ENCODE measurements at regions of chr16 and their contacts with region 1.

Region 1: DNA sequence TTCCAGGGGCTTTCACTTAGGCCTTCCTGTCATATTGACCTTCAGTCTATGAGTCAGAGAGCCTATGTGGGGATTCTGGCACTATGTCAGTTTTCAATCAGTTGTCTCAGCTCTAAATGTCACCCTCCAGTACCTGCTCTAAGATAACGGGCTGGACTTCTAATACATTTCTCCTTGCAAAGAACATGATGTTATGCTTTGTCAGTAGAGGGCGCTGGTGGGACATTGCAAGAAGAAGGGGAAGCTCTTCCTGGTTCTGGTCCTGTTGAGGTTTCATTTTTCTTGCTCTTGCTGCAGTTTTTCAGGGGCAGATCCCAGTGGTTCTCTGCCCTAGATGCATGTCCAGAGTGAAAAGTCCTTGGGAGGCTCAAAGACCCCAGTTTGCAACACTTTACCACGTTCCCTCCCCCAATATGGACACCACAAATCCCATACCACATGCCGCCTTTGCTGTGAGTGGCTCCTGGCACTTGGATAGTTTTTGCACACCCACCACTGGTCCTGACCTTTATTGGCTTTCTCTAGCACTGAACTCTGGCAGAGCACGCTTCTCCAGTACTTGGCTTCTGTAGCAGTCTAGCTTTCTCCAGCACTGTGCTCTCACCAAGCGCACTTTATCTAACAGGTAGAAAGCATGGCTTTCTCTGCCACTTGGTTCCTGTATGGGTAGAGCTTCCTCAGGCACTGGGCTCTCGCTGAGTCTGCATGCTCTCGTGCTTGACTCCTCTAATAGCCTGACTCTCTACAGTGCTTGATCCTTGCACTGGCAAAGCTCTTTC is 49.0 kb downstream of the BCL7C start:
- DNase-seq: peak; percentile 93
- H3K4me3 Mint-ChIP-seq: no peak overlapping the region
- H3K27ac Mint-ChIP-seq: no peak overlapping the region
- H3K4me1 Mint-ChIP-seq: peaks cover 8% of the 10 kb centered on the region
- H3K27me3 Mint-ChIP-seq: no peaks in the 10 kb centered on the region

Region 2: GRCh38 chr16:29891525-29892457 is 953.1 kb before region 1 on chr16:
- CTCF ChIA-PET with region 1: no interaction called
- intact Hi-C with region 1: no loop called
- DNase-seq: no peak
- H3K4me3 Mint-ChIP-seq: no peak overlapping the region
- H3K27ac Mint-ChIP-seq: no peak overlapping the region
- H3K4me1 Mint-ChIP-seq: no peaks in the 10 kb centered on the region
- H3K27me3 Mint-ChIP-seq: peaks cover 4% of the 10 kb centered on the region

Region 3: DNA sequence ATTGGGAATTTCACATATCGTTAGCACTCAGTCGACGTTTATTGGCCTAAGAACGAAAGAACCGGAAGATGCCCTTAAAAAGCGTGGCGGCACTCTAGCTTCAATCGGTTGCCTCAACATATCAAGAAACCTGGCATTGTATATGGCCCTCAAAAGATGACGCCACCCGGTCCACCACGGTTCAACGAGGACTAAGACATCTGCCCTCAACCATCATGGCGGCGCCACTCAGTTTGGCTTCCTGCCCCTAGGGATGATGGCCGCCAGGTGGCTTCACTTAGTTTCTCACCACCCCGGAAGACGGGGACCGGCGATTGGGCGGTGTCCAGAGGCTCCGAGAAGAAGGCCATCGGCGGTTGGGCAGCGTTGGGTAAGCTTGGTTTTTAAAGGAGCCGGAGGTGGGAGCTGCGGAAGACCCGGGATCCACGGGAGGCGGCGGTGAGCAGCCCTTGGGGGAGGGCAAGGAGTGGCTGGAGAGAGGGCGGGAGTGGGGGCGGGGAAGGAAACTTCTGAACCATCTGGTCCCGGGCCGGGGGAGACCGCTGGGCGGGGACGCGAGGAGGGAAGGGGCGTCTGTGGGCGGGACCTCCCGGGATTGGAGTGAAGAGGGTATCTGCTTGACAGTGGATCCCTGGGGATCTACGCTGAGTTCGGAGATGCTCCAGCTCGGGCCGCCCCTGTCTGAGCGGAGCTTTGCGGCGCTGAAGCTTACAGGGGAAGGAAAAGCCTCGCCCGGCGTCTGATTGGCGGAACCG is 194.3 kb before region 1 on chr16 and contains the start of gene PRR14:
- CTCF ChIA-PET with region 1: no interaction called
- intact Hi-C with region 1: no loop called
- DNase-seq: peak; percentile 100
- H3K4me3 Mint-ChIP-seq: peak within 1 kb of the TSS; percentile 85
- H3K27ac Mint-ChIP-seq: peak within 1 kb of the TSS; percentile 91
- H3K4me1 Mint-ChIP-seq: peaks cover 22% of the 10 kb centered on the region
- H3K27me3 Mint-ChIP-seq: no peaks in the 10 kb centered on the region
- total RNA-seq, gene PRR14: 50.6 to 52.4 TPM

Region 4: GRCh38 chr16:30663820-30664396 is 181.0 kb before region 1 on chr16:
- CTCF ChIA-PET with region 1: no interaction called
- intact Hi-C with region 1: no loop called
- DNase-seq: no peak
- H3K4me3 Mint-ChIP-seq: no peak overlapping the region
- H3K27ac Mint-ChIP-seq: peak overlapping the region; percentile 98
- H3K4me1 Mint-ChIP-seq: peaks cover 37% of the 10 kb centered on the region
- H3K27me3 Mint-ChIP-seq: no peaks in the 10 kb centered on the region

Region 5: DNA sequence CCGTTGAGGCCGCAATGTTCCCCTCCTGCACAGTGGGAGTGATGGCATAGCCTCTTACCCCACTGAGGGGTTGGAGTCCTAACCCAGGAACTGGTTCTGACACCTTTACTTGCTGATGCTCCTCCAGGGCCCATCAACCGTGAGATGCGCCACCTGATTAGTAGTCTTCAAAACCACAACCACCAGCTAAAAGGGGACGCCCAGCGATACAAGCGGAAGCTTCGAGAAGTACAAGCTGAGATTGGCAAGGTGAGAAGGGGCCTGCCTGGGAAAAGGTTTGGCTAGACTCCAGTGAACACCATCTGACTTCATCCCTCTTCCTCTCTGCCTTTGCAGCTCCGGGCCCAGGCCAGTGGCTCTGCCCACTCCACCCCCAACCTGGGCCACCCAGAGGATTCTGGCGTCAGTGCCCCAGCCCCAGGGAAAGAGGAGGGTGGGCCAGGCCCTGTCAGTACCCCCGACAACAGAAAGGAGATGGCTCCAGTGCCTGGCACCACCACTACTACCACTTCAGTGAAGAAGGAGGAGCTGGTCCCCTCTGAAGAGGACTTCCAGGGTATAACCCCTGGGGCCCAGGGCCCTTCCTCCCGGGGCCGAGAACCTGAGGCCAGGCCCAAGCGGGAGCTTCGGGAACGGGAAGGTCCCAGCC is 77.0 kb before region 1 on chr16:
- CTCF ChIA-PET with region 1: no interaction called
- intact Hi-C with region 1: no loop called
- DNase-seq: no peak
- H3K4me3 Mint-ChIP-seq: no peak overlapping the region
- H3K27ac Mint-ChIP-seq: no peak overlapping the region
- H3K4me1 Mint-ChIP-seq: peaks cover 13% of the 10 kb centered on the region
- H3K27me3 Mint-ChIP-seq: no peaks in the 10 kb centered on the region

Region 6: DNA sequence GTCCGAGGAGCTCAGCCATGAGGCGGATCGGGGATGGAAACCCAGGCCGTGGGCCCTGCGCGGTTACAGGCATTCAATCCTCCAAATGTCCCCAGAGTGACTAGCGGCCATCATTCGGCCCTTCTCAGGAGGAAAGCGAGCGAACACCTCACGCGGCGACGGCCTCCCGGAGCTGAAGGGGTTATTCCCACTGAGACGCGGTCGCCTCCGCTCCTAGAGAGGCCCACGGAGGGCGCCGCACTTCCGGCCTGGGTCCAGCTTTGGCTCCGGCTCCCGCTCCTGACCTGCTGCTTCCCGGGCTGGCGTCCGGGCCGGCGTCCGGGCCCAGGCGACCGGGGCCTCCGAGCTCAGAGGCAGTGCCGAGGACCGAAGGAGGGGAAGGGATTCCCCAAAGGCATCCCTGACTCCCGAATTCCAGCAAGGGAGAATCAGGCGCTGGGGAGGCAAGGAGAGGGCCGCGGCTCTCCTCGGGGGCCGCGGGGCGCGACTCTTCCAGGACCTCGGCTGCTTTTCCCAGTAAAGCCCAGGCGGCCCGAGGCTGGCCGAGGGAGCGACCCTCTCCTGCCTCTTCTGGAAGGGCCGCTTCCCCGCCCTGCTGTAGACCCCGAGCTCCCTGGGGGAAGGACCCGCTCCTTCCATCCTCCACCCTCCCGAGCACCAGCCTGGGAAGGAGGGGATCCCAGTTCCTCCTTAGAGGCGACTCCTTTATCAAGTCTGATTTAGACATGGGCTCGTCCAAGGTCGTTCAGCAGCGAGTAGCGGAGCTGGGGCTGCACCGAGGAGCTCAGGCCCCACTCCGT is 39.3 kb before region 1 on chr16:
- CTCF ChIA-PET with region 1: interaction called, 11 read pairs
- intact Hi-C with region 1: no loop called
- DNase-seq: peak; percentile 60
- H3K4me3 Mint-ChIP-seq: peak overlapping the region; percentile 67
- H3K27ac Mint-ChIP-seq: peak overlapping the region; percentile 31
- H3K4me1 Mint-ChIP-seq: peaks cover 19% of the 10 kb centered on the region
- H3K27me3 Mint-ChIP-seq: no peaks in the 10 kb centered on the region

Region 7: DNA sequence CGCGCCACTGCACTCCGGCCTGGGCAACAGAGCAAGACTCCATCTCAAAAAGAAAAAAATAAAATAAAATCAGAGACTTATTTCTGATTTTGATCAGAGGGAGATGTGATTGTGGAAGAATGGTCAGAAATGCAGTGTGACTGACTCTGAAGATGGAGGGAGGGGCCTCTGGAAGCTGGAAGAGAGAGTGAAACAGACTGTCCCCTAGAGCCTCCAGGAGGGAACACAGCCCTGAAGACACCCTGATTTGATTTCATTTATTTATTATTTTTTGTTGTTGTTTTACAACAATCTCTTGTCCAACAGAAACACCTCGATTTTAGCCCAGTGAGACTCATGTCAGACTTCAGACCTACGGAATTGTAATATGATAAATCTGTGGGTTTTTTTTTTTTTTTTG is 22.9 kb after region 1 on chr16:
- CTCF ChIA-PET with region 1: interaction called, 12 read pairs
- intact Hi-C with region 1: no loop called
- DNase-seq: no peak
- H3K4me3 Mint-ChIP-seq: no peak overlapping the region
- H3K27ac Mint-ChIP-seq: no peak overlapping the region
- H3K4me1 Mint-ChIP-seq: peaks cover 3% of the 10 kb centered on the region
- H3K27me3 Mint-ChIP-seq: no peaks in the 10 kb centered on the region

Region 8: DNA sequence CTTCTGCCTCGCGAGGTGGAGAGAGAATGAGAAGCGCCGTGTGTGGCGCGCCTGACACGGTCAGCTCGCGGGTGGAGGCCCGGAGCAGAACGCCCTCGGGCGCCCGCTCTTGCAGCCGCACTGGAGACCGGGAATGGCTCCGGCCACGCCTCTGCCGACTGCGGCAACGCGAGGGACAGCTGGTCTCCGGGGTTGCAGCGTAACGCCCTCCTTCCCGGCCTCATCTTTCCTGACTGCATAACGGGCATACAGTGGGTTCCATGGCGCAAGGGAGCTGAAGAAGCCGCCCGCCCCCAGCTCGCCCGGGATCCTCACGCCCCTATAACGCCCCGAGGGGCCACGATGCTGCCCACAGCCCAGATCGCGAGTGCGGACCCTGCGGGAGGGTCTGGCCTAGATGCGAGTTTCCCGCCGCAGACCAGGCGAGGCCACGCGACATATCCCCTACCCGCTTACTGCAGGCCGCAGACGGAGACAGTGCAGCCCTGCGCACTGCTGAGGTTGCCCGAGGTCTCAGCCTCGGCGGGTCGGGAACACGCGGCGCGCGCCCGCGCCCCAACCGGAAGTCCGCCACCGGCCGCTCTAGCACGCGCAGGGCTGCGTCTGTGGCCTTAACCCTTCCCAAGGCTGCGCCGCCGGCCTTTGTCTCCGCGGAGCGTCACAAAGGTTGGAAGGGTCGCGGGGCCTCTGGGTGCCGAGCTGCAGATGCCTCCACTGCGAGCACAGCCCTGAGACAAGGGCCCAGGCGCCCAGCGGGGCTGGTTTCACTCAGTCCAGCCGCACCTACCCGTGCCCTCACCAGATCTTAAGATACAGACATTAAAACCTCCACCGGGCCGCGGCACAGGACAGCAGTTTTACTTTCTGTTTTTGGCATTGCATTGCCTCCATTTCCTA is 30.2 kb after region 1 on chr16:
- CTCF ChIA-PET with region 1: interaction called, 22 read pairs
- intact Hi-C with region 1: loop called (anchors 2 kb)
- DNase-seq: peak; percentile 90
- H3K4me3 Mint-ChIP-seq: peak overlapping the region; percentile 92
- H3K27ac Mint-ChIP-seq: peak overlapping the region; percentile 96
- H3K4me1 Mint-ChIP-seq: peaks cover 40% of the 10 kb centered on the region
- H3K27me3 Mint-ChIP-seq: no peaks in the 10 kb centered on the region

Region 9: DNA sequence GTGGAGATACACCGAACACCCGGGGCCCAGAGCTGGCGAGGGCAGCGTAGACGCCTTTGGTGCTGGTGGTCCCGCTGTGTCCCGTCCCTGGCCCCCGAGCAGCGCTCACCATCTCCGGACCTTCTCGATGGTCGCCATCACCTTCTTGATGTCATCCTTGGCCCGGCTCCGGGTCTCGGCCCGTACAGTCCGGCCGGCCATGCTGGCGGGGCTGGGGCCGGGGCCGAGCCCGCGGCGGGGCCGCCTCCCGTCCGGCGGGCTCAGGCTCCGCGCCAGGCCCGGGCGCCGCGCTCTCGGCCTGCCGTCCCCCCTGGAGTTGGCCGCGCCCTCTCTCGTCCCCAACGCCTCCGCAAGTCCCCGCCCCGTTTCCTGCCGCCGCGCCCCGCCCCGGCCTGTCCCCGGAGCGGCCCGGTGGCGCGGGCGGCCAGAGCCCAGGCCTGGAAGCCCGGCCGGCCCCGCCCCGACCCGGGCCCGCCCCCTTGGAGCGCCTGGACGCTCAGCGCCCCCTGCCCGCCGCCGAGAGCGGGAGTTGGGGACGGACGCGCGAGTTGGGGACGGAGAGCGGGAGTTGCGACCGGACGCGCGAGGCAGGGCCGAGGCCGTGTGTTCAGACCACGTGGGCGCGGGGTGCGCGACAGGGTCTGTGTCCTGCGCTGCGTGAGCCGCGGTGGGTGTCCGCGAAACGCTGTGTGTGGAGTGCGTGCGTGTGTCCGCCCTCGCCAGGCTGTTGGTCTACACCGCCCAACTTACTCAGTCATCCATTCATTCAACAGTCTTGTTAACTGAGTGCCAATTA is 49.1 kb after region 1 on chr16 and contains the start of gene BCL7C:
- CTCF ChIA-PET with region 1: interaction called, 94 read pairs
- intact Hi-C with region 1: loop called (anchors 1 kb)
- DNase-seq: peak; percentile 90
- H3K4me3 Mint-ChIP-seq: peak within 1 kb of the TSS; percentile 84
- H3K27ac Mint-ChIP-seq: peak within 1 kb of the TSS; percentile 78
- H3K4me1 Mint-ChIP-seq: peaks cover 39% of the 10 kb centered on the region
- H3K27me3 Mint-ChIP-seq: no peaks in the 10 kb centered on the region
- total RNA-seq, gene BCL7C: 18.1 to 18.6 TPM

Region 10: DNA sequence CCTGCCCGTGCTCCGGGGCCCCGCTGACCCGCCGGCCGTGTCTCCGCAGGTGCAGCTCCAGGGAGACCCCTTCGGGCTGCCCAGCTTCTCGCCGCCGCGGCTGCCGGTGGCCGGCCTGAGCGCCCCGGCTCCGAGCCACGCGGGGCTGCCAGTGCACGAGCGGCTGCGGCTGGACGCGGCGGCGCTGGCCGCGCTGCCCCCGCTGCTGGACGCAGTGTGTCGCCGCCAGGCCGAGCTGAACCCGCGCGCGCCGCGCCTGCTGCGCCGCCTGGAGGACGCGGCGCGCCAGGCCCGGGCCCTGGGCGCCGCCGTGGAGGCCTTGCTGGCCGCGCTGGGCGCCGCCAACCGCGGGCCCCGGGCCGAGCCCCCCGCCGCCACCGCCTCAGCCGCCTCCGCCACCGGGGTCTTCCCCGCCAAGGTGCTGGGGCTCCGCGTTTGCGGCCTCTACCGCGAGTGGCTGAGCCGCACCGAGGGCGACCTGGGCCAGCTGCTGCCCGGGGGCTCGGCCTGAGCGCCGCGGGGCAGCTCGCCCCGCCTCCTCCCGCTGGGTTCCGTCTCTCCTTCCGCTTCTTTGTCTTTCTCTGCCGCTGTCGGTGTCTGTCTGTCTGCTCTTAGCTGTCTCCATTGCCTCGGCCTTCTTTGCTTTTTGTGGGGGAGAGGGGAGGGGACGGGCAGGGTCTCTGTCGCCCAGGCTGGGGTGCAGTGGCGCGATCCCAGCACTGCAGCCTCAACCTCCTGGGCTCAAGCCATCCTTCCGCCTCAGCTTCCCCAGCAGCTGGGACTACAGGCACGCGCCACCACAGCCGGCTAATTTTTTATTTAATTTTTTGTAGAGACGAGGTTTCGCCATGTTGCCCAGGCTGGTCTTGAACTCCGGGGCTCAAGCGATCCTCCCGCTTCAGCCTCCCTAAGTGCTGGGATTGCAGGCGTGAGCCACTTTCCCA is 57.4 kb after region 1 on chr16:
- CTCF ChIA-PET with region 1: interaction called, 94 read pairs
- intact Hi-C with region 1: loop called (anchors 1 kb)
- DNase-seq: peak; percentile 54
- H3K4me3 Mint-ChIP-seq: peak overlapping the region; percentile 98
- H3K27ac Mint-ChIP-seq: peak overlapping the region; percentile 98
- H3K4me1 Mint-ChIP-seq: peaks cover 29% of the 10 kb centered on the region
- H3K27me3 Mint-ChIP-seq: no peaks in the 10 kb centered on the region

Region 11: DNA sequence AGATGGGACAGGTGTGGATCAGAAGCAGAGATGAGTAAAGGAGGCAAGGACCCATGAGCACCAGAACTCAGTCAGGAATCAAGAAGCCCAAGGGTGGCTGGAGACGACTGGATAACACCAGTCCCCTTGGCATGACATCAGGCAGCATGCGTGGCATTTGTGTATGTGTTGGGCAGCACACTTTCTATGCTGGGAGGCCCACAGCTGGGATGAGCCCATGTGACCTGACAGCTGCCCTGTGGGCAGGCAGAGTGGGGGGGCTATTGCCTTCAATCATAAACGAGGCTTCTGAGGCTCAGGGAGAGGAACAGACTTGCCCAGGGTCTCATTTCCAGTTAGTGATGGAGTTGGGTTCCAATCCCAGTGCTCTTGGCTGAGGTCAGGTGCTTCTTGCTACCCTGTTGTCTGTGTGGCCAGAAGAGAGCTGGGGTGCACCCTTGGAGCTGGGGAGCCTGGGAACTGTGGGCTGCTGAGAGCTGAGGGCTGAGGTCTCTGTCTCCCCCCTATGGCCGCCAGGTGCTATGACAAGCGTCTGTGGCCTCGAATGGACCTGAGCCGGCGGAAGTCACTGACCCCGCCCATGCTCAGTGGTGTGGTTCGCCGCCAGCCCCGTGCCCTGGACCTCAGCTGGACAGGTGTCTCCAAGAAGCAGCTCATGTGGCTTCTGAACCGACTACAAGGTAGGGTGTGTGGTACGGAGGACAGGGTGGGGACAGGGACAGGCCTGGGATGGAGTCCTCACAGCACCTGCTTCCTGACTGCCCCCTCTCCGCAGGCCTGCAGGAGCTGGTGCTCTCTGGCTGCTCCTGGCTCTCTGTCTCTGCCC is 97.0 kb after region 1 on chr16:
- CTCF ChIA-PET with region 1: interaction called, 74 read pairs
- intact Hi-C with region 1: loop called (anchors 1 kb)
- DNase-seq: peak; percentile 79
- H3K4me3 Mint-ChIP-seq: no peak overlapping the region
- H3K27ac Mint-ChIP-seq: peak overlapping the region; percentile 51
- H3K4me1 Mint-ChIP-seq: peaks cover 21% of the 10 kb centered on the region
- H3K27me3 Mint-ChIP-seq: no peaks in the 10 kb centered on the region

Measured in activated naive CD4-positive, alpha-beta T cell treated with anti-CD3 and anti-CD28 coated beads for 36 hours (primary cell).